ENCODE measurements at regions of chr4 and their contacts with region 1.

Region 1: GRCh38 chr4:40149960-40150385 is 46.9 kb upstream of the RHOH start:
- DNase-seq: peak; percentile 40 to 61
- H3K4me3 ChIP-seq: no peak overlapping the region
- H3K27ac ChIP-seq: no peak overlapping the region
- H3K4me1 ChIP-seq: no peaks in the 10 kb centered on the region
- H3K27me3 ChIP-seq: no peaks in the 10 kb centered on the region
- CTCF ChIP-seq: peak; percentile 94

Region 2: DNA sequence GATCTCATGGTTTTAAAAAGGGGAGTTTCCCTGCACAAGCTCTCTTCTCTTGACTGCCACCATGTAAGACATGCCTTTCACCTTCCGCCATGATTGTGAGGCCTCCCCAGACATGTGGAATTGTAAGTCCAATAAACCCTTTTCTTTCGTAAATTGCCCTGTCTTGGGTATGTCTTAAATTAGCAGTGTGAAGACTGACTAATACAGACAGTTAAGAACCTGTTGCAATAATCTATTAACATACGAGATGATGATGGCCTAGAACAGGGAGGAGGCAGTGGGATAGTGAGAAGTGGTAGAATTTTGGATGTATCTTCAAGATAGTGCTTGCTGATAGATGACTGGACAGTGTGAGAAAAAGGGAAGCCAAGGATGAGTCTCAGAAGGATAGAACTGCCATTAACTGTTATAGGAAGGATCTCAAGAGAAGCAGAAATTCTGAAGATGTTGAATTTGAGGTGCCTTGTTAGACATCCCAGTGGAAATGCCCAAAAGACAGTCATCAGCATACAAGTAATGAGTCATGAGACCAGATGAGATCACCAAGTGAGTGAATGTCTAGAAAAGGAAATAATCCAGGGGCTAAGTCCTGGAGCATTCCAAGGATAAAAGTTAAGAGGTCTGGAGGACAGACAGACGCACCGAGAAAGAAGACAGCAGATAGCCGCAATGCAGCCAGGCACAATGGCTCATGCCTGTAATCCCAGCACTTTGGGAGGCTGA is 583.9 kb before region 1 on chr4:
- CTCF ChIA-PET with region 1: no interaction called
- POLR2A ChIA-PET with region 1: no interaction called
- intact Hi-C with region 1: no loop called
- DNase-seq: no peak
- H3K4me3 ChIP-seq: no peak overlapping the region
- H3K27ac ChIP-seq: no peak overlapping the region
- H3K4me1 ChIP-seq: peaks cover 18% of the 10 kb centered on the region
- H3K27me3 ChIP-seq: no peaks in the 10 kb centered on the region
- CTCF ChIP-seq: no peak

Region 3: GRCh38 chr4:40309250-40309774 is 159.3 kb after region 1 on chr4:
- CTCF ChIA-PET with region 1: no interaction called
- POLR2A ChIA-PET with region 1: no interaction called
- intact Hi-C with region 1: loop called (anchors 1 kb)
- DNase-seq: peak; percentile 66 to 77
- H3K4me3 ChIP-seq: peak overlapping the region; percentile 45; the same call in 1 of the 2 replicates
- H3K27ac ChIP-seq: no peak overlapping the region
- H3K4me1 ChIP-seq: peaks cover 31% of the 10 kb centered on the region
- H3K27me3 ChIP-seq: no peaks in the 10 kb centered on the region
- CTCF ChIP-seq: peak; percentile 83